ENCODE measurements at regions of chr10 and their contacts with region 1.

Region 1: DNA sequence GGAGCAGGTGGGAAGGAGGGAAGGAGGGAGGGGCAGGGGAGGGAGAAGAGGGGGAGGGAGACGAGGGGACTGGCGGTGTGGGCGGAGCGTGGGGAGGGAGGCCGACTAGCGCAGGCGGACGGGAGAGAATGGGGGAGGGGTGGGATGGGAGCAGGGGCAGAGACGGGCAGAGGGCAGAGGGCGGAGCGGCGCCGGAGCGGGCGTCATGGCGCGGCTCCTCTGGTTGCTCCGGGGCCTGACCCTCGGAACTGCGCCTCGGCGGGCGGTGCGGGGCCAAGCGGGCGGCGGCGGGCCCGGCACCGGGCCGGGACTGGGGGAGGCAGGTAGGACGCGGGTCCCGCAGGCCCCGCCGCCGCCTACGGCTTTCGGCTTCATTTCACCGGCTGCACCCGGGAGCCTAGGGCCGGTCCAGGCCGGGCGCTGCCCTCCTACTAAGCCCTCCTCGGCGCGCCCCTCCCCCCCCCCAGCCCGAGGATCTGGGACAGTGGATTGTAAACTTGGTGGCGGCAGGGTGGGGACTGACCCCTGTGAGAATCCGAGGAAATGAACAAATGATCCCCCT is at the start of gene MSRB2:
- DNase-seq: peak; percentile 87
- H3K4me3 ChIP-seq: peak within 1 kb of the TSS; percentile 91
- H3K27ac ChIP-seq: no peak within 1 kb of the TSS
- H3K4me1 ChIP-seq: peaks cover 17% of the 10 kb centered on the region
- CTCF ChIP-seq: no peak
- total RNA-seq, gene MSRB2: 7.2 and 8.1 TPM in 2 replicates

Region 2: GRCh38 chr10:22003079-22003913 is 1092.2 kb before region 1 on chr10 and contains the start of gene DNAJC1:
- CTCF ChIA-PET with region 1: no interaction called
- POLR2A ChIA-PET with region 1: no interaction called
- intact Hi-C with region 1: loop called (anchors 2 kb)
- DNase-seq: peak; percentile 96
- H3K4me3 ChIP-seq: peak within 1 kb of the TSS; percentile 80
- H3K27ac ChIP-seq: peak within 1 kb of the TSS; percentile 40
- H3K4me1 ChIP-seq: peaks cover 26% of the 10 kb centered on the region
- CTCF ChIP-seq: no peak
- total RNA-seq, gene DNAJC1: 12.1 and 16.9 TPM in 2 replicates

Region 3: DNA sequence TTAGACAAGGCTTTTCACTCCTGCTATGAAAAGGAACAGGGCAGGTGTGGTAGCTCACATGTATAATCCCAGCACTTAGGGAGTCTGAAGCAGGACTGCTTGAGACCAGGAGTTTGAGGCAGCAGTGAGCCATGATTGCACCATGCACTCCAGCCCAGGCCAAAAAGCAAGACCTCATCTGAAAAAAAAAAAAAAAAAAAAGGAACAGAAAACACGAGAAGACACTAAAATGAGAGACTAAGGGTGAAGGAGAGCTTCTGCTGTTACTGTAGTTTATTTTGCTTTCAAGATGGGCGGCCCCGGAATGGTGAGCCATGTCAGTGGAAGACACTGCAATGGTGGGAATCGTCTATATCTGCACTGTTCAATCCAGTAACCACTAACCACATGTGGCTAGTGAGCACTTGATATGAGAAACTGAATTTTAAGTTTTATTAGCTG is 391.0 kb before region 1 on chr10:
- CTCF ChIA-PET with region 1: no interaction called
- POLR2A ChIA-PET with region 1: no interaction called
- intact Hi-C with region 1: no loop called
- DNase-seq: no peak
- H3K4me3 ChIP-seq: peak overlapping the region; percentile 18
- H3K27ac ChIP-seq: peak overlapping the region; percentile 33
- H3K4me1 ChIP-seq: peaks cover 22% of the 10 kb centered on the region
- CTCF ChIP-seq: no peak

Region 4: GRCh38 chr10:22958338-22958737 is 137.1 kb before region 1 on chr10:
- CTCF ChIA-PET with region 1: no interaction called
- POLR2A ChIA-PET with region 1: no interaction called
- intact Hi-C with region 1: no loop called
- DNase-seq: no peak
- H3K4me3 ChIP-seq: no peak overlapping the region
- H3K27ac ChIP-seq: no peak overlapping the region
- H3K4me1 ChIP-seq: no peaks in the 10 kb centered on the region
- CTCF ChIP-seq: no peak

Region 5: DNA sequence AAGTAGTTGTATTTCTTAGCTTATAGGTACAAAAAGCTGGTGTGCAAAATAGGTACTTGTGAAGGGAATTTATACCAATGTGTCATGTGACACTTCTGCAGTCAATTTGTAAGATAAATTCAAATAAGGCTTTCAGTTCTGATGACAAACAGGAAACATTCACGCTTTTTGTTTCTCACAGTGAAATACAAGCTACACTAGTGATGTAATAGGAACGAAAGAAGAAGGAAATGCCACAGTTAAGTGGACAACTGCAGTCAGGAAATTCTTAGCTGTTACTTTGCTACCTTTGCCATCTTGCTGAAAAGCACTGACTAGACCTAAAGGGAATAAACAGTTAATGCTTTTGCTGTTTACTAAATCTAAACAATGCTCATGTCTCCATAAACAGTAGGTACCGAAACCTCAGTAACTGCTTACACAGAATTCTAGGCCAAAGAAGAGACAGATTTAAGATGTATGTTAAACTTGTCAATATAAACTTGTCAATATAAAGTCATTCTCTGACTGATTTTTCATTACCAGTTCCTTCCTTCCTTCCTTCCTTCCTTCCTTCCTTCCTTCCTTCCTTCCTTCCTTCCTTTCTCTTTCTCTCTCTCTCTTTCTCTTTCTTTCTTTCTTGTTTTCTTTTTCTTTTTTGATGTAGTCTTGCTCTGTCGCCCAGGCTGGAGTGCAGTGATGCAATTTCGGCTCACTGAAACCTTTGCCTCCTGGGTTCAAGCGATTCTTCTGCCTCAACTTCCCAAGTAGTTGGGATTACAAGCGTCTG is 353.5 kb after region 1 on chr10:
- CTCF ChIA-PET with region 1: no interaction called
- POLR2A ChIA-PET with region 1: no interaction called
- intact Hi-C with region 1: loop called (anchors 5 kb)
- DNase-seq: peak; percentile 68
- H3K4me3 ChIP-seq: peak overlapping the region; percentile 30
- H3K27ac ChIP-seq: peak overlapping the region; percentile 38
- H3K4me1 ChIP-seq: peaks cover 41% of the 10 kb centered on the region
- CTCF ChIP-seq: no peak

Region 6: GRCh38 chr10:25080880-25081581 is 1985.5 kb after region 1 on chr10:
- CTCF ChIA-PET with region 1: interaction called, 13 read pairs
- POLR2A ChIA-PET with region 1: no interaction called
- intact Hi-C with region 1: no loop called
- DNase-seq: peak; percentile 59
- H3K4me3 ChIP-seq: no peak overlapping the region
- H3K27ac ChIP-seq: no peak overlapping the region
- H3K4me1 ChIP-seq: no peaks in the 10 kb centered on the region
- CTCF ChIP-seq: peak; percentile 94